IMR-90 (cell line): ENCODE measurements at regions of chr4 and their contacts with region 1.

Region 1: GRCh38 chr4:142353149-142353738 is 492.9 kb downstream of the INPP4B start:
- DNase-seq: peak; percentile 80
- ATAC-seq: peak; percentile 74
- H3K4me3 ChIP-seq: no peak overlapping the region
- H3K27ac ChIP-seq: 0 out of 2 replicates have a peak overlapping the region, but pooled peaks have one; percentile 15
- H3K4me1 ChIP-seq: peaks cover 5% of the 10 kb centered on the region
- H3K27me3 ChIP-seq: no peaks in the 10 kb centered on the region
- CTCF ChIP-seq: peak; percentile 87
- POLR2A ChIP-seq: no peak
- RAD21 ChIP-seq: peak; percentile 83

Region 2: DNA sequence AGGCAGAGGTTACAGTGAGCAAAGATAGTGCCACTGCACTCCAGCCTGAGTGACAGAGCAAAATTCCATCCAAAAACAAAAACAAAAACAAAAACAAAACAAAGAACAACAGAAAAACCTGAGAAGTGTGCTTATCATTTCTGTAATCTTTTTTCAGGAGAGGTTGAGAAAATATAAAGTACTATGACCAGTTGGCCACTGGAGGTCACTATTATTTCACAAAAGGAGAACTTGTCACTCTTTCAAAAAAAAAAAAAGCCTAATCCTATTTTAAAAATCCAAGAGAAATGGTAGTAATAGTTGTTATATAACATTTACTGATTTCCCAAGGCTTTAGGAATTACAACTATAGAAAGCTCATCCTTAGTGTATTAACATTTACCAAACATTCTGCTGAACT is 1195.0 kb before region 1 on chr4:
- CTCF ChIA-PET with region 1: no interaction called
- POLR2A ChIA-PET with region 1: no interaction called
- dilution Hi-C with region 1: no loop called
- in situ Hi-C with region 1: no loop called
- intact Hi-C with region 1: loop called (anchors 10 kb)
- DNase-seq: peak; percentile 55
- ATAC-seq: peak; percentile 54; the same call in 1 of the 2 replicates
- H3K4me3 ChIP-seq: no peak overlapping the region
- H3K27ac ChIP-seq: no peak overlapping the region
- H3K4me1 ChIP-seq: no peaks in the 10 kb centered on the region
- H3K27me3 ChIP-seq: 0 out of 2 replicates have a peak, but pooled peaks cover 1% of the 10 kb centered on the region
- CTCF ChIP-seq: peak; percentile 67
- POLR2A ChIP-seq: no peak
- RAD21 ChIP-seq: peak; percentile 80

Region 3: DNA sequence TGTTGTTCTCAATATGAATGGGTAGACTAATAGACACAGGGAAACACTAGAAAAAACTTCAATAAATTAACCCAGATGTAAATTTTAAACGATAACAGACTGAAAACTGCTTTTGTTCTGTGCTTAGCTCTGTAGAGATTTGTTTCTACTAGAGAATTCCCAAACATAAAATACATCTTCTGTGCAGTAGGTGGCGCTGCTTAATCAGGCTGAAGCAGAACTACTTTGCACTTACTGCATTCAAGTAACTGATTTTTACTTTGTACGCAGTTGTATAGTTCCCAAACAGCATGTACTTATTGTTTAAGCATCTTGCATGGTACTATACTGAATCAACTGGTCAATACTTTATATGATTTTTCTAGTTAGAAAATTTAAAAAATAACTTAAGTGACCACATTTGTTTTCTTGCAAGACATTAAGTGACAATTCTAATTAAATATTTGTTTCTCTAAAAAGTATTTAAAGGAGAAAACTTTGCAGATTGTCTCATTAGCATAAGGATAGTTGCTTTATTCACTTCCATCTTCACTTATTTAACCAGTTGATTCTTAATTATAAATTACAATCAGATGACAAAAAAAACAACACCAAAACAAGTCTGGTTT is 226.2 kb before region 1 on chr4:
- CTCF ChIA-PET with region 1: interaction called, 3 read pairs
- POLR2A ChIA-PET with region 1: no interaction called
- dilution Hi-C with region 1: no loop called
- in situ Hi-C with region 1: loop called (anchors 10 kb)
- intact Hi-C with region 1: loop called (anchors 2 kb)
- DNase-seq: peak; percentile 80
- ATAC-seq: peak; percentile 80
- H3K4me3 ChIP-seq: no peak overlapping the region
- H3K27ac ChIP-seq: no peak overlapping the region
- H3K4me1 ChIP-seq: peaks cover 5% of the 10 kb centered on the region
- H3K27me3 ChIP-seq: no peaks in the 10 kb centered on the region
- CTCF ChIP-seq: peak; percentile 85
- POLR2A ChIP-seq: no peak
- RAD21 ChIP-seq: peak; percentile 95

Region 4: DNA sequence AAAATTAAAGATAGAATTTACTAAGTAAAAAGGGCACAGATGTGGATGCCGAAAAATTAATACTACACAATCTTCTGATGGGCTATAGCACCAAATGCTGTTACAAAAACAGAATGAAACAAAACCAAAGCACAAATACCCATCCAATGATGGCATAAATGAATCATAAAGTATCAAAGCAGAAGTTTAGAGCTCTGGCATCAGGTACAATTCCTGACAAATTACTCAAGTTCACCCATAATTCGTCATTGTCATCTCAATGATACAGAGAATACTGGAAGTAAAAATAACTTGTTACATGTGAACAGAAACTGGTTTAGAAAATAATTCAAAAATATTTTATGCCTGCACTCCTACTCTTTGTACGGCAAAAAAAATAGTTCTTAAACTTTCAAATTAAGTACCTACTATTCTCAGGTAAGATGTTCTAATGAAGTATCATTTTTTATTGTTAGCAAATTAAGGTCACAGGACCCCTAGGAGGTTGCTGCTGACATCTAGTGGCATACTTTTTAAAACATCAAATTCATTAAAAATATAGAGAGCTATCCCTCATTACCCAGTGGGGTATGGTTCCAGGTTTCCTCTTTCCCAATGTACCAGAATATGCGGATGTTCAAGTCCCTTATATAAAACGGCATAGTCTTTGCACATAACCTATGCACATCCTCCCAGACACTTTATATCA is 366.8 kb after region 1 on chr4:
- CTCF ChIA-PET with region 1: interaction called, 8 read pairs
- POLR2A ChIA-PET with region 1: no interaction called
- dilution Hi-C with region 1: no loop called
- in situ Hi-C with region 1: loop called (anchors 10 kb)
- intact Hi-C with region 1: loop called (anchors 1 kb)
- DNase-seq: peak; percentile 21
- ATAC-seq: peak; percentile 37; the same call in 1 of the 2 replicates
- H3K4me3 ChIP-seq: no peak overlapping the region
- H3K27ac ChIP-seq: no peak overlapping the region
- H3K4me1 ChIP-seq: no peaks in the 10 kb centered on the region
- H3K27me3 ChIP-seq: no peaks in the 10 kb centered on the region
- CTCF ChIP-seq: peak; percentile 57
- POLR2A ChIP-seq: no peak
- RAD21 ChIP-seq: peak; percentile 67

Region 5: DNA sequence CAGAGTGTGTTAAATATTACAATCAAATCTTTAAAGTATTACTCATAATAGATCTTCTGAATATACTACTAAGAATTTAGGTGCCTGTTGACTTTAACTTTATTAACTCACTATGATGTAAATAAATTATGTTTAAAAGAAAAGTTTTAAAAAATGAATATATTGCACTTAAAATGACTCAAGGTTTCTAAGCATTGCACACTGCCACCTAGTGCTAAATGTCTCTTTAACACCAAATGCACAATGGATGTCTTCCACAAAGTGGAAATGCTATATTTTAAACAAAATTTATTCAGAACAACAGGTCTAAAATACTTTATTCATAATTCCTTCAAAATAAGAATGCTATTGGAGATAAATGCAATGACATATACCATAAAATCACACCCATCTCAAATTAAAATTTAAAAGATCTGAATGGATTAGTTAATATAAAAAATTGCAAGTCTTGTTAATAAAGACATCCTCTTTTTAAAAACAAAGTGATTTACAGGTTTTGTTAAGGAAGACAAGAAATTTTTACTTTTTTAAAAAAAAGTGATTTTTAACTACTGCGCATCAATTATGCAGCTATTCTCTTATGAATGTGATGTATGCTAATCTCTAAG is 487.4 kb after region 1 on chr4:
- CTCF ChIA-PET with region 1: no interaction called
- POLR2A ChIA-PET with region 1: no interaction called
- dilution Hi-C with region 1: no loop called
- in situ Hi-C with region 1: loop called (anchors 10 kb)
- intact Hi-C with region 1: loop called (anchors 1 kb)
- DNase-seq: peak; percentile 68
- ATAC-seq: no peak
- H3K4me3 ChIP-seq: no peak overlapping the region
- H3K27ac ChIP-seq: no peak overlapping the region
- H3K4me1 ChIP-seq: peaks cover 2% of the 10 kb centered on the region; the same call in 1 of the 2 replicates
- H3K27me3 ChIP-seq: no peaks in the 10 kb centered on the region
- CTCF ChIP-seq: peak; percentile 83
- POLR2A ChIP-seq: no peak
- RAD21 ChIP-seq: peak; percentile 77

Region 6: GRCh38 chr4:143025081-143025704 is 671.9 kb after region 1 on chr4:
- CTCF ChIA-PET with region 1: no interaction called
- POLR2A ChIA-PET with region 1: no interaction called
- dilution Hi-C with region 1: no loop called
- in situ Hi-C with region 1: no loop called
- intact Hi-C with region 1: loop called (anchors 5 kb)
- DNase-seq: peak; percentile 33
- ATAC-seq: peak; percentile 85
- H3K4me3 ChIP-seq: no peak overlapping the region
- H3K27ac ChIP-seq: no peak overlapping the region
- H3K4me1 ChIP-seq: no peaks in the 10 kb centered on the region
- H3K27me3 ChIP-seq: no peaks in the 10 kb centered on the region
- CTCF ChIP-seq: 0 out of 2 replicates have a peak, but pooled peaks have one; percentile 19
- POLR2A ChIP-seq: no peak
- RAD21 ChIP-seq: peak; percentile 28

Region 7: DNA sequence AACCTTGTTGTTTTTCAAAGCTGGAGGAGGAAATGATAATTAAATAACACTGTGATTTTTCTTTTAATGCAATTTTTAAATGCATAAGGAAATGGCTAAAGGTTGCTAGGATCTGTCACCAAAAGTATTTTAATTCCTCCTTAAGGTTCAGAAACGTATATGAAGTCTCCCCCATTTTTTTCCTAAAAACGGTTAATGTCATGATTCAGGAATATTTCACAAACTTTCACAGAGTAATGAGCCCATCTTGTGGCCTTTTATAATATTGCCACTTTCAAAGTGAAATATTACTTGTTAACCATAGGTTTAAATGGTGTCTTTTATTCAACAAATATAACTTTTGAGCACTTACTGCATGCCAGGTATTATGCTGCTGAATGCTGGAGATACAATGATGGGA is 732.0 kb after region 1 on chr4:
- CTCF ChIA-PET with region 1: no interaction called
- POLR2A ChIA-PET with region 1: no interaction called
- dilution Hi-C with region 1: no loop called
- in situ Hi-C with region 1: no loop called
- intact Hi-C with region 1: no loop called
- DNase-seq: peak; percentile 8
- ATAC-seq: peak; percentile 40; the same call in 1 of the 2 replicates
- H3K4me3 ChIP-seq: no peak overlapping the region
- H3K27ac ChIP-seq: no peak overlapping the region
- H3K4me1 ChIP-seq: no peaks in the 10 kb centered on the region
- H3K27me3 ChIP-seq: no peaks in the 10 kb centered on the region
- CTCF ChIP-seq: peak; percentile 41
- POLR2A ChIP-seq: no peak
- RAD21 ChIP-seq: peak; percentile 46